ENCODE measurements at regions of chr1 and their contacts with region 1.

Region 1: GRCh38 chr1:110766025-110766647 is 91.4 kb upstream of the KCNA3 start:
- DNase-seq: peak; percentile 57 to 73 (median 70)
- H3K4me3 ChIP-seq: no peak overlapping the region
- H3K4me3 Mint-ChIP-seq: peak overlapping the region in 1 of 2 donors; percentile 51
- H3K27ac ChIP-seq: no peak overlapping the region
- H3K27ac Mint-ChIP-seq: peak overlapping the region in 3 of 7 donors; percentile 59 to 69 (median 65)
- H3K4me1 ChIP-seq: peaks cover 6 to 10% of the 10 kb centered on the region in 2 donors
- H3K4me1 Mint-ChIP-seq: peaks cover 14% of the 10 kb centered on the region
- H3K27me3 ChIP-seq: peaks cover 0 to 2% of the 10 kb centered on the region in 2 donors
- H3K27me3 Mint-ChIP-seq: peaks cover 6 to 7% (median 7%) of the 10 kb centered on the region in 3 donors
- CTCF ChIP-seq: peak; percentile 85

Region 2: DNA sequence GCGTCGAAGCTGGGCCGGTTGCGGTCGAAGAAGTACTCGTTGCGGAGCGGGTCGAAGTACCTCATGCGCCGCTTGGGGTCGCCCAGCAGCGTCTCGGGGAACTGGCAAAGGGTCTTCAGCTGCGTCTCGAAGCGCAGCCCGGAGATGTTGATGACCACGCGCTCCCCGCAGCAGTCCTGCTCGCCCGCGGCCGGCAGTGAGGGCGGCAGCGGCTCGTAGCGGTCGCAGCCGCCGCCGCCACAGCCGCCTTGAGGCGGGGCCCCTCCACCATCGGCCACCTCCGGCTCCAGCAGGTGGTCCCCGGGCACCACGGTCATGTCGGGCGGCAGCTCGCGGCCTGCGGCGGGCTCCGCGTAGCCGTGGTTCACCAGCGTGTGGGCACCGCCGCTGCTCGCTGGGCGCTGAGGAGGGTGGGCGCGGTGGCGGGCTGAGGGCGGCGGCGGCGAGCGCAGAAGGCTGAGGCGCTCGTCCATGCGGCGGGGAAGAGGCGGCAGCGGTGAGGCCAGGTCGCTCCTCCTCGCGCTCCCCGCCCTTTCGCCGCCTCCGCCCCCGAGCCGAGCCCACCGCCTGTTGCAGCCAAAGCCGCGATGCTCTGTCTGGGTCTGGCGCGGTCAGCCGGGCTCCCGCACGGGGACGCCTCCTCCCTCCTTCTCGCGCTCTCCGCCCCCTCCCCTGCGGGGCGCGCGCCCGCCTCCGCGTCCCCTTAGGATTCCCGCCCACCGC is 91.6 kb before region 1 on chr1 and contains the start of gene KCNA3:
- intact Hi-C with region 1: loop called in 1 of 2 experiments (anchors 10 kb)
- DNase-seq: peak; percentile 17 to 39 (median 36)
- H3K4me3 ChIP-seq: peak within 1 kb of the TSS; percentile 70 to 89 (median 78)
- H3K4me3 Mint-ChIP-seq: peak within 1 kb of the TSS; percentile 95 to 99
- H3K27ac ChIP-seq: peak within 1 kb of the TSS; percentile 10 to 83
- H3K27ac Mint-ChIP-seq: peak within 1 kb of the TSS in 6 of 7 donors; percentile 84 to 93 (median 90)
- H3K4me1 ChIP-seq: peaks cover 38 to 73% of the 10 kb centered on the region in 2 donors
- H3K4me1 Mint-ChIP-seq: peaks cover 60% of the 10 kb centered on the region
- H3K27me3 ChIP-seq: no peaks in the 10 kb centered on the region
- H3K27me3 Mint-ChIP-seq: peaks cover 2 to 16% (median 10%) of the 10 kb centered on the region in 3 donors
- CTCF ChIP-seq: peak; percentile 20
- polyA plus RNA-seq, gene KCNA3: 4.8 to 7.7 (median 5.6) TPM

Region 3: GRCh38 chr1:110726755-110727154 is 39.4 kb before region 1 on chr1:
- intact Hi-C with region 1: no loop called
- DNase-seq: no peak
- H3K4me3 ChIP-seq: no peak overlapping the region
- H3K4me3 Mint-ChIP-seq: no peak overlapping the region
- H3K27ac ChIP-seq: no peak overlapping the region
- H3K27ac Mint-ChIP-seq: no peak overlapping the region
- H3K4me1 ChIP-seq: peaks cover 0 to 4% of the 10 kb centered on the region in 2 donors
- H3K4me1 Mint-ChIP-seq: peaks cover 7% of the 10 kb centered on the region
- H3K27me3 ChIP-seq: peaks cover 0 to 5% of the 10 kb centered on the region in 2 donors
- H3K27me3 Mint-ChIP-seq: peaks cover 13 to 19% (median 19%) of the 10 kb centered on the region in 3 donors
- CTCF ChIP-seq: no peak